ENCODE measurements at regions of chr14 and their contacts with region 1.

Region 1: GRCh38 chr14:100662879-100663760 is 63.6 kb upstream of the DLK1 start:
- DNase-seq: peak; percentile 77
- H3K4me3 Mint-ChIP-seq: no peak overlapping the region
- H3K27ac Mint-ChIP-seq: no peak overlapping the region
- H3K4me1 Mint-ChIP-seq: peaks cover 17% of the 10 kb centered on the region
- H3K27me3 Mint-ChIP-seq: peaks cover 38% of the 10 kb centered on the region
- CTCF ChIP-seq: peak; percentile 69

Region 2: DNA sequence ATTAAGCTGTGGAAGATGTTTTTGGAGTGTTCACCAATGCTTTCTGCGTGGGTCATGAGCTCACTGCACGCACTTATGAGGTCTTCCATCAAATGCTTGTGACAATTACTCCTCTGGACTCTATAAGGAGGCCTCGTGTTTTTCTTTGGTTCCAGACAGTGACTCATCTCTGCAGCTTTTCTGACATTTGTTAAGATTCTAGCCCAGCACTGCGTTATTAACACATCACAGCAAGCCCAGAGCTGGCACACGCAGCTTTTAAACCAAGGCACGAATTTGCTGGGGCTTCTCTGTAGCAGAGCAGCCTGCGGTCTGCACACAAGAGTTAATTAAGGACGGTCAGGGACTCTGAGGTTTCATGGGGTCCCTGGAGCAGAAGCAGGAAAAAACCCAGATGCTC is 179.7 kb after region 1 on chr14:
- CTCF ChIA-PET with region 1: no interaction called
- intact Hi-C with region 1: loop called (anchors 10 kb)
- DNase-seq: no peak
- H3K4me3 Mint-ChIP-seq: no peak overlapping the region
- H3K27ac Mint-ChIP-seq: no peak overlapping the region
- H3K4me1 Mint-ChIP-seq: no peaks in the 10 kb centered on the region
- H3K27me3 Mint-ChIP-seq: peaks cover 19% of the 10 kb centered on the region
- CTCF ChIP-seq: no peak

Region 3: GRCh38 chr14:101665515-101666078 is 1002.5 kb after region 1 on chr14:
- CTCF ChIA-PET with region 1: no interaction called
- intact Hi-C with region 1: loop called (anchors 10 kb)
- DNase-seq: peak; percentile 79
- H3K4me3 Mint-ChIP-seq: no peak overlapping the region
- H3K27ac Mint-ChIP-seq: no peak overlapping the region
- H3K4me1 Mint-ChIP-seq: peaks cover 8% of the 10 kb centered on the region
- H3K27me3 Mint-ChIP-seq: peaks cover 30% of the 10 kb centered on the region
- CTCF ChIP-seq: peak; percentile 33